MCF 10A (cell line): ENCODE measurements at regions of chr2 and their contacts with region 1.

Region 1: DNA sequence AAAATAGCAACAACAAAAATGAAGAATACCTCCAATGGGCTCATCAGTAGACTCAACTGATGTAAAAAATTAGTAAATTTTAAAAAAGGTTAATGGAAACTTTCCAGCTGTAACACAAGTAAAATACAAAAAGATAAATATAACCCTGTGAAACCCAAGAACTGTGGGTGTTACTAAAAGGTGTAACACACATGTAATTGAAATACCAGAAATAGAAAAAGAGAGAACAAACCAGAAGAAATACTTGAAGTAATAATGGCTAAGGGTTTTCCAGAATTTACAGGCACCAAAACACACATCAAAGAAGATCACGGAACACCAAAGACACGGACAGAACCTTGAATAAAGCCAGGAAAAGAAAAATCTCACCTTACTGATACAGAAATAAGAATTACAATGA is 590.6 kb upstream of the RAB6C start:
- DNase-seq: no peak
- H3K4me3 Mint-ChIP-seq: no peak overlapping the region
- H3K27ac Mint-ChIP-seq: no peak overlapping the region
- H3K4me1 Mint-ChIP-seq: no peaks in the 10 kb centered on the region
- H3K27me3 Mint-ChIP-seq: no peaks in the 10 kb centered on the region
- CTCF ChIP-seq: no peak

Region 2: DNA sequence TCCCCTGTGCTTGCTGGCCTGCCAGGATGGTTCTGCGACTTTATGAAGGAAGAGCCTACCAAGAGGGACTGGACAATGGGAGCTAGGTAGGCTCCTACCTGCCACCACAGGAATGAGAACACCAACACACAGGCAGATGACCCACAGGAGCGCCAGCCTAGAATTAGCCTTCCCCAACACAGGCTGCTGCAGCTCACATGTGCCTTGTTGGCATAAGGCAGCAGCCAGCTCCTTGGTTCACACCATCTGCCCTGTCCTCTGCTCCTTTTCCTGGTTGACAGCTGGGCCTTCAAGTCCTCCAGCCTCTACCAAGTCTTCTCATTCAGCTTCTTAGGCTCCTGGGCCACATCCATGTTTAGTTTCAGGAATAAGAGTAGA is 114.8 kb before region 1 on chr2:
- CTCF ChIA-PET with region 1: no interaction called
- POLR2A ChIA-PET with region 1: no interaction called
- intact Hi-C with region 1: no loop called
- DNase-seq: no peak
- H3K4me3 Mint-ChIP-seq: no peak overlapping the region
- H3K27ac Mint-ChIP-seq: no peak overlapping the region
- H3K4me1 Mint-ChIP-seq: no peaks in the 10 kb centered on the region
- H3K27me3 Mint-ChIP-seq: no peaks in the 10 kb centered on the region
- CTCF ChIP-seq: no peak

Region 3: DNA sequence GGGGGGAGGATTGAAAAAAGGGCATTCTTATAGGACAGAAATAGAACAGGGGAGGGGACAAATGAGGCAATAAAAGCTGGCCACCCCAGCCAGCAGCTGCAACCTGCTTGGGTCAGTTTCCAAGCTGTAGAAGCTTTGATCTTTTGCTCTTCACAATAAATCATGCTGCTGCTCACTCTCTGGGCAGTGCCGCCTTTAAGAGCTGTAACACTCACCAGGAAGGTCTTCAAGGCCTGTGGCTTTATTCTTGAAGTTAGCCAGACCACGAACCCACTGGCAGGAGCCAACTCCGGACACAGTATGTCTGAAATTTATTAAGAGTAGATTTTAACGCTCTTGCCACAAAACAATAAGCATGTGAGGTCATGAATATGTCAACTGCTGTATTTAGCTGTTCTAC is 59.3 kb before region 1 on chr2:
- CTCF ChIA-PET with region 1: no interaction called
- POLR2A ChIA-PET with region 1: no interaction called
- intact Hi-C with region 1: loop called (anchors 10 kb)
- DNase-seq: no peak
- H3K4me3 Mint-ChIP-seq: no peak overlapping the region
- H3K27ac Mint-ChIP-seq: no peak overlapping the region
- H3K4me1 Mint-ChIP-seq: no peaks in the 10 kb centered on the region
- H3K27me3 Mint-ChIP-seq: no peaks in the 10 kb centered on the region
- CTCF ChIP-seq: no peak